Naive thymus-derived CD4-positive, alpha-beta T cell (primary cell): ENCODE measurements at regions of chr15 and their contacts with region 1.

Region 1: DNA sequence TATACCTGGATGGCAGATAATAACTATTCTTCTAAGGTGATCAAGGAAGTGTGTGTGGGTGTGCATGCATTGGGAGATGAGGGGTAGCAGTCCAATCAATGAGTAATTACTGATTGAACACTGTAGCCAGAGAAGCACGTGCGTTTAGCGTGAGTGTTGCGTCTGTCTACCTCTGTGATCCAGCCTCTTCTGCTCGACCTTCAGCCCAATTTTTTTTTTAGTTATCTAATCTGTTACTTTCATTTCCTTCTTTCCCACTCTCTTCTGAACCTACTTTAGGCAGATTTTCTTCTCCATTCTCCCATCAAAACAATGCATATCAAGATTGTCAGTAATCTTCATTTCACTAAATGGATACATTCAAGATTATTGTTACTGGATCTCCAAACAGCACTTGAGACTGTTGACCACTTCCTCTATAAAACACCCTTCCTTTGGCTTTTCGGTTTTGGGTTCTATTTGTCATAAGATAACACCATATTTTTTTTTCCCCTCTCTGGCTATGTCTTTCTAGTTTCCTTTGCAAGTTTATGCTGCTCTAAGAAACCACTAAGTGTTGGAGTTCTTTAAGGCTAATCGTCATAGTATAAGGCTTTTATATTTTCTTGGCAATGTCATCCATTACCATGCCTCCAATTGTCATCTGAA is 41.0 kb downstream of the MCTP2 start:
- DNase-seq: no peak
- ATAC-seq: peak; percentile 86
- H3K4me3 ChIP-seq: no peak overlapping the region
- H3K4me3 Mint-ChIP-seq: no peak overlapping the region
- H3K27ac ChIP-seq: no peak overlapping the region
- H3K27ac Mint-ChIP-seq: no peak overlapping the region
- H3K4me1 ChIP-seq: peaks cover 0 to 31% of the 10 kb centered on the region in 2 donors
- H3K4me1 Mint-ChIP-seq: peaks cover 0 to 18% (median 7%) of the 10 kb centered on the region in 7 donors
- H3K27me3 ChIP-seq: no peaks in the 10 kb centered on the region
- H3K27me3 Mint-ChIP-seq: peaks cover 0 to 3% (median 0%) of the 10 kb centered on the region in 5 donors

Region 2: GRCh38 chr15:94008104-94009074 is 264.0 kb before region 1 on chr15:
- CTCF ChIA-PET with region 1: no interaction called
- POLR2A ChIA-PET with region 1: no interaction called
- intact Hi-C with region 1: no loop called
- DNase-seq: no peak
- ATAC-seq: no peak
- H3K4me3 ChIP-seq: no peak overlapping the region
- H3K4me3 Mint-ChIP-seq: no peak overlapping the region
- H3K27ac ChIP-seq: no peak overlapping the region
- H3K27ac Mint-ChIP-seq: no peak overlapping the region
- H3K4me1 ChIP-seq: no peaks in the 10 kb centered on the region
- H3K4me1 Mint-ChIP-seq: peaks cover 3 to 9% (median 5%) of the 10 kb centered on the region in 7 donors
- H3K27me3 ChIP-seq: no peaks in the 10 kb centered on the region
- H3K27me3 Mint-ChIP-seq: peaks cover 0 to 19% (median 6%) of the 10 kb centered on the region in 5 donors

Region 3: DNA sequence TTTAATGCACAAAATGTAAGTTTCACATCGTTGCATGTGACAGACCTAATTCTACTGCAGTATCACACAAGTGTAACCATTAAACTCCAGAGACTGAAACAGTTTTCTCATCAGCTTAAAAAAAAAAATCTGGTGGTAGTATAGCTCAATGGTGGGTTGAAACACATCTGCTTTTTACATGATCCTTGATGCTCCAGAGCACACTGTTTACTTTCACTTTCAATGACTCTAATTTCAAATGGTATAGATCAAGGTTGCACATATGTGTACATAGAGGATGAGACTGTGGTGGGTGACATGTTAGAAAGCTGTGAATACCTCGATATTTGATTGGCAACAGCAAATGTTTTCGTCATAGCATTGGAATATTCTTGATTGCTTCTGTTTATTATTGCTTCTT is 18.6 kb before region 1 on chr15:
- CTCF ChIA-PET with region 1: no interaction called
- POLR2A ChIA-PET with region 1: no interaction called
- intact Hi-C with region 1: loop called in 1 of 2 experiments (anchors 2 kb)
- DNase-seq: no peak
- ATAC-seq: peak; percentile 51
- H3K4me3 ChIP-seq: no peak overlapping the region
- H3K4me3 Mint-ChIP-seq: peak overlapping the region in 4 of 10 donors; percentile 10 to 45 (median 34)
- H3K27ac ChIP-seq: no peak overlapping the region
- H3K27ac Mint-ChIP-seq: peak overlapping the region in 2 of 9 donors; percentile 13 to 26
- H3K4me1 ChIP-seq: peaks cover 3 to 4% of the 10 kb centered on the region in 2 donors
- H3K4me1 Mint-ChIP-seq: peaks cover 9 to 65% (median 21%) of the 10 kb centered on the region in 7 donors
- H3K27me3 ChIP-seq: no peaks in the 10 kb centered on the region
- H3K27me3 Mint-ChIP-seq: no peaks in the 10 kb centered on the region

Region 4: GRCh38 chr15:94287794-94288246 is 15.4 kb after region 1 on chr15:
- CTCF ChIA-PET with region 1: interaction called, 3 read pairs
- POLR2A ChIA-PET with region 1: no interaction called
- intact Hi-C with region 1: loop called in 1 of 2 experiments (anchors 1 kb)
- DNase-seq: peak in 4 of 9 donors; percentile 4 to 48 (median 12)
- ATAC-seq: peak; percentile 95
- H3K4me3 ChIP-seq: no peak overlapping the region
- H3K4me3 Mint-ChIP-seq: peak overlapping the region in 7 of 10 donors; percentile 3 to 86 (median 36)
- H3K27ac ChIP-seq: no peak overlapping the region
- H3K27ac Mint-ChIP-seq: peak overlapping the region in 2 of 9 donors; percentile 44 to 90
- H3K4me1 ChIP-seq: peaks cover 0 to 19% of the 10 kb centered on the region in 2 donors
- H3K4me1 Mint-ChIP-seq: peaks cover 11 to 55% (median 33%) of the 10 kb centered on the region in 7 donors
- H3K27me3 ChIP-seq: no peaks in the 10 kb centered on the region
- H3K27me3 Mint-ChIP-seq: no peaks in the 10 kb centered on the region

Region 5: GRCh38 chr15:94306700-94307650 is 34.6 kb after region 1 on chr15:
- CTCF ChIA-PET with region 1: no interaction called
- POLR2A ChIA-PET with region 1: no interaction called
- intact Hi-C with region 1: loop called in 1 of 2 experiments (anchors 5 kb)
- DNase-seq: no peak
- ATAC-seq: peak; percentile 61
- H3K4me3 ChIP-seq: peak overlapping the region; percentile 19
- H3K4me3 Mint-ChIP-seq: peak overlapping the region in 2 of 10 donors; percentile 10 to 54
- H3K27ac ChIP-seq: no peak overlapping the region
- H3K27ac Mint-ChIP-seq: peak overlapping the region in 2 of 9 donors; percentile 29 to 89
- H3K4me1 ChIP-seq: peaks cover 0 to 30% of the 10 kb centered on the region in 2 donors
- H3K4me1 Mint-ChIP-seq: peaks cover 6 to 61% (median 11%) of the 10 kb centered on the region in 7 donors
- H3K27me3 ChIP-seq: no peaks in the 10 kb centered on the region
- H3K27me3 Mint-ChIP-seq: no peaks in the 10 kb centered on the region